Left ventricle myocardium superior (tissue), 1 donor: ENCODE measurements at regions of chr1 and their contacts with region 1.

Region 1: DNA sequence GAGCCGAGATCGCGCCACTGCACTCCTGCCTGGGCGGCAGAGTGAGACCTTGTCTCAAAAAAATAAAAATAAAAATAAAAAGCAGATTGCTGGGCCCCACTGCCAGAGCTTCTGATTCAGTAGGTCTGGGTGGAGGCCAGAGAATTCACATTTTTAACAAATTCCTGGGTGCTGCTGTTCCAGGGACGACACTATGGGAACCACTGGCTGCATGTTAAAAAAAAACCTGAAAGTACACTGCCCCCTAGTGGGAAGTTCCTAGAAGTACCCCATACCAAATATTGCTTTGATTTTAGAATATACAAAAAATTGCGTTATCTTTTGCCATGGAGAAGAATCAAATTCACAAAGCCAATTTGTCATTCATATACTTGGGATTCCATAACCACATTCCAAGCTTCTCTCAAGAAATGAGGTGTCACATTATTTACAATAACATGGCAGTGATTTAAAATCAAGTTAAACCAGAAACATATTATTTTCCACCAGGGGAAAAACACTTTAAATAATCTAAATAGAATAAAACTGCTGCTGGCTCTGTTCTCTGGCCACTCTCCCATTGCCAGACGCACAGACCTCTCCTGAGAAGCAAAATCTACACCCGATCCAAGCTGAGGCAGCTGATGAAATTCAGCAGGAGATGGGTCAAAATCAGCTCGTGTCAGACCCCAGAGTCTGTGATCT is 27.4 kb downstream of the SYF2 start:
- DNase-seq: no peak
- ATAC-seq: peak; percentile 52

Region 2: GRCh38 chr1:24849672-24850295 is 355.2 kb before region 1 on chr1:
- intact Hi-C with region 1: loop called (anchors 10 kb)
- DNase-seq: no peak
- ATAC-seq: no peak

Region 3: DNA sequence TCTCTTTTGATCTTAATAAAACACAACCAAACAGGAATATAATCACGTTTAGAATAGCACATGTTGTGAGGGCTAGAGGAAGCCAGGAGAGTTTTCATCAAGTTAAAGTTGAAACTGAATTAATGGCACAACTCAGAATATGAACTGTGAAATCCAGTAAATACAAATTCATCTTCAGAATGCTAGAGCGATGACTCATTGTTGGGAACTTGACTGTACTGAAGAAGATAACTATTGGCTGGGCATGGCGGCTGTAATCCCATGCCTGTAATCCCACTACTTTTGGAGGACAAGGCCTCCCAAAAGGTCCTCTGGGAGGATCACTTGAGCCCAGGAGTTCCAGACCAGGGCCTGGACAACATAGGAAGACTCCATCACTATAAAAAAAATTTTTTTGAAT is 18.5 kb after region 1 on chr1:
- intact Hi-C with region 1: no loop called
- DNase-seq: no peak
- ATAC-seq: no peak